ENCODE measurements at regions of chr2 and their contacts with region 1.

Region 1: DNA sequence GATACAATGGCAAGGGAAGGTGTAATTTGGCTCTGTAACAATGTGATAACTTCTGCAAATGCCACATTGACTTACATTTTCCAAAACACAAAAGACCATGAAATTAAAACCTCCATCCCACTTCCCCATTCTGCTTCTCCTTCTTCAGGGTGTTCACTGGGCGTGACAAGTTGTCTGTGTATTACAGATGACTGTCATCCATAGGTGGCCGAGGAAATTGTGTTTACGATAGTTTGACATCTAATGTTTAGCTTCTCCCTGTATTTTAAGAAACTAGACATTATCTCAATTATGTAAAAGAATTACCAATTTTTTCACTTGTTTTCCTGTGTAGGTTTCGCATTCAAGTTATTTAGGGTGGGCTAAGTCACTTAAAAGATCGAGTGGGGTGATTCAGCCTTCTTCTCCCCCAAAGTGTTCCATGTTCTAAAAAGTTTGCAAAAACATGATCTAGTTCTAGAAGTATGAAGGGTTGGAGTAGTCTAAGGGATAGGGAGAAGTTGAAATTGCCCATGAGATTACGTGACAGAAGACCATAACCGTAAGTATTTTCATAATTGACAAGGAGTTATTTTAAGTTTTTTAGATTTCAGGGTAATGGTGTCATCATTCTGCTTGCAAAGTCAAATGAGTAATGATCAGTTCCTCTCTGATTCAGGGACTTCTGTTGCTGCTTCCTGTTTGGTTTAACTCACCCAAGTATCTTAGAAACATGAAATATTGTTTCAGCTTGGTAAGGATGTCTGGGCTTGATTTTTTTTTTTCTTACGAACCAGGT is 25.2 kb upstream of the CYTIP start:
- DNase-seq: peak; percentile 91
- ATAC-seq: peak; percentile 80
- H3K4me3 ChIP-seq: peak overlapping the region; percentile 38 to 89 (median 55)
- H3K4me3 Mint-ChIP-seq: peak overlapping the region; percentile 87
- H3K27ac ChIP-seq: peak overlapping the region; percentile 96 to 99
- H3K27ac Mint-ChIP-seq: peak overlapping the region; percentile 99
- H3K4me1 ChIP-seq: peaks cover 61 to 68% of the 10 kb centered on the region in 2 donors
- H3K4me1 Mint-ChIP-seq: peaks cover 76% of the 10 kb centered on the region
- H3K27me3 ChIP-seq: no peaks in the 10 kb centered on the region
- H3K27me3 Mint-ChIP-seq: no peaks in the 10 kb centered on the region
- CTCF ChIP-seq: no peak

Region 2: GRCh38 chr2:157404363-157404762 is 64.8 kb before region 1 on chr2:
- CTCF ChIA-PET with region 1: interaction called, 4 read pairs
- POLR2A ChIA-PET with region 1: interaction called, 6 read pairs
- intact Hi-C with region 1: loop called (anchors 1 kb)
- DNase-seq: peak; percentile 91
- ATAC-seq: peak; percentile 91
- H3K4me3 ChIP-seq: peak overlapping the region in 1 of 5 experiments; percentile 46
- H3K4me3 Mint-ChIP-seq: peak overlapping the region; percentile 68
- H3K27ac ChIP-seq: peak overlapping the region; percentile 67 to 86
- H3K27ac Mint-ChIP-seq: peak overlapping the region; percentile 92
- H3K4me1 ChIP-seq: peaks cover 29% of the 10 kb centered on the region in 2 donors
- H3K4me1 Mint-ChIP-seq: peaks cover 51% of the 10 kb centered on the region
- H3K27me3 ChIP-seq: no peaks in the 10 kb centered on the region
- H3K27me3 Mint-ChIP-seq: no peaks in the 10 kb centered on the region
- CTCF ChIP-seq: no peak

Region 3: GRCh38 chr2:157420771-157421323 is 48.3 kb before region 1 on chr2:
- CTCF ChIA-PET with region 1: no interaction called
- POLR2A ChIA-PET with region 1: no interaction called
- intact Hi-C with region 1: loop called (anchors 1 kb)
- DNase-seq: peak; percentile 77
- ATAC-seq: peak; percentile 71
- H3K4me3 ChIP-seq: no peak overlapping the region
- H3K4me3 Mint-ChIP-seq: peak overlapping the region; percentile 78
- H3K27ac ChIP-seq: peak overlapping the region; percentile 58 to 88
- H3K27ac Mint-ChIP-seq: peak overlapping the region; percentile 94
- H3K4me1 ChIP-seq: peaks cover 49 to 52% of the 10 kb centered on the region in 2 donors
- H3K4me1 Mint-ChIP-seq: peaks cover 57% of the 10 kb centered on the region
- H3K27me3 ChIP-seq: no peaks in the 10 kb centered on the region
- H3K27me3 Mint-ChIP-seq: no peaks in the 10 kb centered on the region
- CTCF ChIP-seq: no peak

Measured in B cell (primary cell).